Stomach (tissue), 19 donors: ENCODE measurements at regions of chr20 and their contacts with region 1.

Region 1: GRCh38 chr20:50189681-50190582 is 698 bp upstream of the CEBPB start:
- DNase-seq: peak; percentile 89 to 97
- H3K4me3 ChIP-seq: peak overlapping the region; percentile 90 to 97 (median 92)
- H3K27ac ChIP-seq: peak overlapping the region; percentile 97 to 99 (median 99)
- H3K4me1 ChIP-seq: peaks cover 24 to 53% (median 45%) of the 10 kb centered on the region in 4 donors
- H3K27me3 ChIP-seq: no peaks in the 10 kb centered on the region
- CTCF ChIP-seq: peak in 5 of 7 experiments; percentile 60 to 87 (median 78)
- EP300 ChIP-seq: no peak
- POLR2A ChIP-seq: no peak

Region 2: DNA sequence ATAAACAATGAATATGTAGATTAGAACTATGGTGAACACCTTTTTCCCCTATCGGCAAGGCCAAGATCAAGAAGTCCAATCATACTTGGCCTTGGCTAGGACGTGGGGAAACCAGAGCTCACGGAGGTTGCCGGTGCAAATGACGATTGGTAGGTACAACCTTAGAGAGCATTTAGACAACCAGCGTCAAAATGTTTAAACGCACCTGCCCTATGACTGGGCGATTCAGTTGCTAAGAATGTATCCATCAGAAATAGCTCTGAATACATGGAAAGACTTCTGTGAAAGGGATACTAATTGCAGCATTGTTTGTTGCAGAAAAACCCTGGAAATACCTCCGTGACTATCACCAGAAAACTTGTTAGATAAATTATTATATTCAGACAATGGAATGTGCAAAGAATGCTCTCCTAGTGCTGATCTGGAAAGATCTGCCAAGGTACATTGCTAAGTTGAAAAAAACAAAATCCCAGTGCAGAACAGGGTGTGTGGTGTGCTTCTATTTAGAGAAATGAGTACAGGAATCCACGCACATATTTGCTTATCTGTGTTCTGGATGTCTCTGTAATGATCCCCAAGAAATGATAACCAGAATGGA is 272.3 kb after region 1 on chr20:
- intact Hi-C with region 1: loop called (anchors 2 kb)
- DNase-seq: no peak
- H3K4me3 ChIP-seq: no peak overlapping the region
- H3K27ac ChIP-seq: peak overlapping the region in 1 of 5 donors; percentile 80
- H3K4me1 ChIP-seq: peaks cover 11 to 25% (median 19%) of the 10 kb centered on the region in 4 donors
- H3K27me3 ChIP-seq: no peaks in the 10 kb centered on the region
- CTCF ChIP-seq: no peak
- EP300 ChIP-seq: no peak
- POLR2A ChIP-seq: no peak

Region 3: DNA sequence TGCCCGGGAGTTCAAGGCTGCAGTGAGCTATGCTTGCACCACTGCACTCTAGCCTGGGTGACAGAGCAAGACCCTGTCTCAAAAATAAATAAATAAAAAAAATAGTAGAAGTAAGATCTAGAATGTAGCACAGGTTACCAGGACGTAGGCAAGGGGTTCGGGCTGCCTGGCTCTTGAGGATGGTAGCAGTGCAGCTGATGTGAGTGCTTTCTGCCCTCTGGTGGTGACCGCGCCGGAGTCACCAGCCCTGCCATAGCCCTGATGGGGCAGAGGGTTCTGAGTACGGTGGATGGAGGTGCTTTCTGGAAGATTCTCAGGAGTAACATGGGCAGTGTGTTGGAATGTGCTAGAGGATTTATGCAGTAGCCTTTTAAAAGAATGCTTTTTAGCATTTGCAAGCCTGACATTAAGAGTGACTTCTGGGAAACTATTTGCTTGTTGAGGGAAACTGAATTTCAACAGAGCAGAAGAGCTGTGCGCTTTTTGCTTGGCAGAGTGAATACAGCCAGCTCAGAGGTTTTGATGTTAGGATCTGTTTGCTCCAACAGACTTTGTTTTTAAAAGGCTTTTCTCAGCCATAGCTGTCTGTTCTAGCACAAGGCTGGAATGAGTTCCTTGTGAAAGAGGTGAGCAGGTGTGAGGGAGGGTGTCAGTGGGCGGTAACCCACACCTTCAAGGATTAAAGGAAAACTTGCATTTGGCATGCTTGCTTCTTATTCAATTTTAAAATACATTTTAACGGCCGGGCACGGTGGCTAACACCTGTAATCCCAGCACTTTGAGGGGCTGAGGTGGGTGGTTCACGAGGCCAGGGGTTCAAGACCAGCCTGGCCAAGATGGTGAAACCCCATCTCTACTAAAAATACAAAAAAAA is 386.2 kb after region 1 on chr20:
- intact Hi-C with region 1: loop called (anchors 5 kb)
- DNase-seq: peak; percentile 77 to 88
- H3K4me3 ChIP-seq: no peak overlapping the region
- H3K27ac ChIP-seq: peak overlapping the region in 4 of 5 donors; percentile 8 to 75 (median 48)
- H3K4me1 ChIP-seq: peaks cover 10 to 63% (median 34%) of the 10 kb centered on the region in 4 donors
- H3K27me3 ChIP-seq: no peaks in the 10 kb centered on the region
- CTCF ChIP-seq: peak in 5 of 7 experiments; percentile 60 to 77 (median 71)
- EP300 ChIP-seq: no peak
- POLR2A ChIP-seq: no peak